ENCODE measurements at regions of chr4 and their contacts with region 1.

Region 1: GRCh38 chr4:15882675-15883086 is 55.9 kb downstream of the FGFBP1 start:
- DNase-seq: peak; percentile 51 to 82
- H3K4me3 ChIP-seq: no peak overlapping the region
- H3K27ac ChIP-seq: 0 out of 2 replicates have a peak overlapping the region, but pooled peaks have one; percentile 7
- H3K4me1 ChIP-seq: no peaks in the 10 kb centered on the region
- H3K27me3 ChIP-seq: no peaks in the 10 kb centered on the region
- CTCF ChIP-seq: peak; percentile 93

Region 2: GRCh38 chr4:15479089-15479912 is 403.4 kb before region 1 on chr4:
- CTCF ChIA-PET with region 1: interaction called, 4 read pairs
- POLR2A ChIA-PET with region 1: no interaction called
- intact Hi-C with region 1: loop called (anchors 1 kb)
- DNase-seq: peak; percentile 35 to 50
- H3K4me3 ChIP-seq: no peak overlapping the region; the same call in 1 of the 2 replicates
- H3K27ac ChIP-seq: no peak overlapping the region
- H3K4me1 ChIP-seq: no peaks in the 10 kb centered on the region
- H3K27me3 ChIP-seq: no peaks in the 10 kb centered on the region
- CTCF ChIP-seq: peak; percentile 70; the same call in 1 of the 2 replicates

Region 3: GRCh38 chr4:15938182-15938581 is 55.5 kb after region 1 on chr4:
- CTCF ChIA-PET with region 1: no interaction called
- POLR2A ChIA-PET with region 1: no interaction called
- intact Hi-C with region 1: loop called (anchors 5 kb)
- DNase-seq: peak; percentile 71 to 72
- H3K4me3 ChIP-seq: peak overlapping the region; percentile 34; the same call in 1 of the 2 replicates
- H3K27ac ChIP-seq: peak overlapping the region; percentile 34; the same call in 1 of the 2 replicates
- H3K4me1 ChIP-seq: peaks cover 27% of the 10 kb centered on the region
- H3K27me3 ChIP-seq: no peaks in the 10 kb centered on the region
- CTCF ChIP-seq: no peak

Region 4: GRCh38 chr4:15956179-15956850 is 73.6 kb after region 1 on chr4:
- CTCF ChIA-PET with region 1: interaction called, 30 read pairs
- POLR2A ChIA-PET with region 1: no interaction called
- intact Hi-C with region 1: loop called (anchors 1 kb)
- DNase-seq: peak; percentile 66 to 73
- H3K4me3 ChIP-seq: no peak overlapping the region
- H3K27ac ChIP-seq: no peak overlapping the region
- H3K4me1 ChIP-seq: peaks cover 5% of the 10 kb centered on the region; the same call in 1 of the 2 replicates
- H3K27me3 ChIP-seq: no peaks in the 10 kb centered on the region
- CTCF ChIP-seq: peak; percentile 93

Measured in PC-9 (cell line).